Left cardiac atrium (tissue), 4 donors: ENCODE measurements at regions of chr5 and their contacts with region 1.

Region 1: DNA sequence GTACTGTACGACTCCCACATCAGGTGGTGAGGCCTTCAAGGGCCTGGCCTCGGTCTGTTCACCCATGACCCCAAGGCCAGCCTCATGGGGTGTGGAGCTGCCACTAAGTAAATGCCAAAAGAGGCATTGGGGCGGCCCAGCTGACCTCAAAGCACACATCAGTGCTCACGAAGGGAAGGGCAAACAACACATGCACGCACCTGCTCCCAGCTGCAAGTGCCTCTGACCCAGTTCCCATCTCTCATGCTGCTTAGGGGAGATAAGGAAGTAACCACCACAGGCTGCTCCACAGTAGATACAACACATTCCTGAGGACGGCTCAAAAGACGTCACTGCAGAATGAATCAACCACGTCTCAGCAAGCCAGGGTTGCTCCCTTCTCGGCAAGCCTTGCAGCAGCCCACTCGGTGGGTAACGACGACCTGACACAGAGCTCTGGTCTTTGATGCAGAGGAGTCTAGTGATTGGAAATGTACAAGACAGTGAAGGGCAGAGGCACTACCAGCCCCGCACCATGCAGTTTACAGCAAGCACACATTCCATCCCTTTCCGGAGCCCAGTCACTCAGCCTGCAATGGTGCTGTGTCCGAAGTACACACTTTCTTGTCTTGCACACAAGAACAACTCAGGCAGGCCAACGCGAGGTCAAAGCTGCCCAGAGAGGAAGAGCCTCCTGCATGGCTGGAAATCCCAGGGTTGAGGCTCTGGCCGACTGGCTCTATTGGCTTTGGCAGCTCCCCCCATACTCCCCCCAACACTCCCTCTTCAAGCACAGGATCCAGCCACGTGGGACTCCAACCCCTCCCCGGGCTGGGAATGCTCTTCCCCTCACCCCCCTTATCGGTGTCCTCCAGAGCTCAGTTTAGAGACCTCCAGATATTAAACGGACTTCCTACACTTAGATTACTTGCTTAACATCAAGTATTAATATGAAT is 31.8 kb downstream of the FABP6 start:
- DNase-seq: peak; percentile 48
- ATAC-seq: peak; percentile 83 to 94

Region 2: GRCh38 chr5:160119142-160119904 is 141.8 kb before region 1 on chr5 and contains the start of gene PWWP2A:
- intact Hi-C with region 1: no loop called
- DNase-seq: peak; percentile 99
- ATAC-seq: peak; percentile 97 to 98
- total RNA-seq, gene PWWP2A: 9.9 to 12.4 TPM

Region 3: GRCh38 chr5:160312134-160312959 is 51.2 kb after region 1 on chr5 and contains the start of gene CCNJL:
- intact Hi-C with region 1: loop called in 1 of 2 experiments (anchors 10 kb)
- DNase-seq: peak; percentile 63
- ATAC-seq: peak; percentile 86 to 92
- total RNA-seq, gene CCNJL: 5.5 to 5.6 TPM